ENCODE measurements at regions of chr12 and their contacts with region 1.

Region 1: DNA sequence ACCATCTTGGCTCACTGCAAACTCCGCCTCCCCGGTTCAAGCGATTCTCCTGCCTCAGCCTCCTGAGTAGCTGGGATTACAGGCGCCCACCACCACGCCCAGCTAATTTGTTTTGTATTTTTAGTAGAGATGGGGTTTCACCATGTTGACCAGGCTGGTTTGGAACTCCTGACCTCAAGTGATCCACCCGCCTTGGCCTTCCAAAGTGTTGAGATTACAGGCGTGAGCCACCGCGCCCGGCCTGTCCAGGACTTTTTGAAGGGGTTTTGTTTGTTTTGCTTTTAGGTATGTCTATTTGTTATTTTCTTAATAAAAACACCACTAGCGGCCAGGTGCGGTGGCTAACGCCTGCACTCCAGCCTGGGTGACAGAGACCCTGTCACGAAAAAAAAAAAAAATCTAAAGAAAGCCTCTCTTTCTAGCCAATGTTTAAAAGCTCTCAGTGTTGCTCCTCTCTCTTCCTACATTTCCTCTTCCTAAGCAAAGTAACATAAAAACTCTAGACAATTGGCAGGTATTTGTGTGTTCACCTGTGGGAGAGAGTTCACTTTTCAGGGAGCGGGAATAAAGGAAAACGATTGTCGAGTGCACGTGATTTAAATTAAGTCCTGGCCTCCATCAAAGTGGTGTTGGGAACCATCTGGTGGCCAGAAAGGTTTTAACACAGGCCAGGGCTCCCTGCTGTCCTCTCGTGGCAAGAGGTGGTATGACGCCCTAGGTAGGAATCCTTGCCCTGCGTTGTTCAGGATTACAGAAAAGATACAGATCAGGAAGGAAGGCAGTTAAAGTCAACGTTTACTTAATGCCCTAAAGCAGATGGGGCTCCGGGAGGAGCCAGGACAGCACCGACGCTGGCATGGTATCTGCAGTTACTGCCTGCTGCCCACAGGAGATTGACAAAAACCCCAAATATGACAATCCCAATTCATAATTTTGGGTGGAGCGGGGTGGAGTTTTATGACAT is 36.2 kb upstream of the ATP23 start:
- DNase-seq: peak; percentile 84
- H3K4me3 Mint-ChIP-seq: no peak overlapping the region
- H3K27ac Mint-ChIP-seq: no peak overlapping the region
- H3K4me1 Mint-ChIP-seq: peaks cover 7% of the 10 kb centered on the region
- H3K27me3 Mint-ChIP-seq: peaks cover 29% of the 10 kb centered on the region

Region 2: DNA sequence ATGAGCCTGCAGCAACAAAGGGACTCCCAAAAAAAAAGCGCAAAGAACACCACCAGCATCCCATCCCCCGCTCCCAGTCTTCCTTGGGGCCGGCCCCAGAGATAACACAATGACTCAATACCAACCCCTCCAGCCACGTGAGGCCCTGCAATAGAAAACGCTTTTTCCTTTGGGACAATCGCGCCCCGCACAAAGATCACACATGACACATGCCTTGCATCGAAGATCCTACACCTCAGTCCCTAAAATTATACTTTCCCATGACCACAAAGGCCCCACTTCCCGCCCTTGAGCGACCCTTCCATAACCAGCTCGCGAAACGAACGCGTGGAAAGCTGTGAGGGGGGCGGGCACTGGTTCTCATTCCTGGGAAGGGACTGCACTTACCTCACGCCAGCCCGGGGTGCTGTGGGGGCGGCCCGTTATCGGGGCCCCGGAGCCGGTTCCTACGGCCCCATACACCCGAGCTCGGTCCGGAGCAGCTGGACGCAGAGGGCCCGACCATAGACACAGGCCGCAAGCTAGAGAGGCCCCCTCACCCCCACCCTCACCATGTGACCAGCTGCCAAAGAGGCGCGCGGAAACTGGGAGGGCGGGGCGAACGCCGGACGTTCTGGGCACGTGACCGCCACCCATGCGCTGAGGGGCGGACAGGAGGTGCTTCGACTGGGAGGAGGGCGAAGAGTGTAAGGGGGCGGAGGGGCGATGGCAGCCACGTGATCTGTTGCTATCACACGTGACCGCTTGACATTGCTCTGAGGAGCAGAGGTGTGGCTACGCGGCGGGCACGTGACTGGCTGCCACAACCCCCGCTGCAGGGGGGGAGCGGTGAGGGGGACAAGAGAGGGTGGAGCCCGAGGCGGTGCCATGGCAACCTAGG is 153.1 kb before region 1 on chr12 and contains the start of gene CDK4:
- CTCF ChIA-PET with region 1: interaction called, 14 read pairs
- POLR2A ChIA-PET with region 1: no interaction called
- DNase-seq: peak; percentile 99
- H3K4me3 Mint-ChIP-seq: peak within 1 kb of the TSS; percentile 95
- H3K27ac Mint-ChIP-seq: peak within 1 kb of the TSS; percentile 74
- H3K4me1 Mint-ChIP-seq: peaks cover 58% of the 10 kb centered on the region
- H3K27me3 Mint-ChIP-seq: peaks cover 3% of the 10 kb centered on the region
- total RNA-seq, gene CDK4: 87.7 to 88.6 TPM

Region 3: GRCh38 chr12:57829025-57829777 is 75.9 kb before region 1 on chr12:
- CTCF ChIA-PET with region 1: interaction called, 43 read pairs
- POLR2A ChIA-PET with region 1: no interaction called
- DNase-seq: no peak
- H3K4me3 Mint-ChIP-seq: no peak overlapping the region
- H3K27ac Mint-ChIP-seq: no peak overlapping the region
- H3K4me1 Mint-ChIP-seq: peaks cover 38% of the 10 kb centered on the region
- H3K27me3 Mint-ChIP-seq: no peaks in the 10 kb centered on the region

Region 4: GRCh38 chr12:57846577-57847319 is 58.4 kb before region 1 on chr12 and contains the start of gene CTDSP2:
- CTCF ChIA-PET with region 1: interaction called, 13 read pairs
- POLR2A ChIA-PET with region 1: interaction called, 74 read pairs
- DNase-seq: peak; percentile 89
- H3K4me3 Mint-ChIP-seq: peak within 1 kb of the TSS; percentile 80
- H3K27ac Mint-ChIP-seq: peak within 1 kb of the TSS; percentile 64
- H3K4me1 Mint-ChIP-seq: peaks cover 33% of the 10 kb centered on the region
- H3K27me3 Mint-ChIP-seq: peaks cover 24% of the 10 kb centered on the region
- total RNA-seq, gene CTDSP2: 137 to 141 TPM

Region 5: GRCh38 chr12:57893431-57894353 is 11.4 kb before region 1 on chr12:
- CTCF ChIA-PET with region 1: interaction called, 17 read pairs
- POLR2A ChIA-PET with region 1: interaction called, 4 read pairs
- DNase-seq: no peak
- H3K4me3 Mint-ChIP-seq: no peak overlapping the region
- H3K27ac Mint-ChIP-seq: no peak overlapping the region
- H3K4me1 Mint-ChIP-seq: peaks cover 49% of the 10 kb centered on the region
- H3K27me3 Mint-ChIP-seq: peaks cover 8% of the 10 kb centered on the region

Measured in activated CD4-positive, alpha-beta memory T cell treated with anti-CD3 and anti-CD28 coated beads, Interleukin-2, amount 10 ng/mL, durations not matched to agents 7 days and 5 days (primary cell).